Common myeloid progenitor, CD34-positive (primary cell): ENCODE measurements at regions of chr4 and their contacts with region 1.

Region 1: DNA sequence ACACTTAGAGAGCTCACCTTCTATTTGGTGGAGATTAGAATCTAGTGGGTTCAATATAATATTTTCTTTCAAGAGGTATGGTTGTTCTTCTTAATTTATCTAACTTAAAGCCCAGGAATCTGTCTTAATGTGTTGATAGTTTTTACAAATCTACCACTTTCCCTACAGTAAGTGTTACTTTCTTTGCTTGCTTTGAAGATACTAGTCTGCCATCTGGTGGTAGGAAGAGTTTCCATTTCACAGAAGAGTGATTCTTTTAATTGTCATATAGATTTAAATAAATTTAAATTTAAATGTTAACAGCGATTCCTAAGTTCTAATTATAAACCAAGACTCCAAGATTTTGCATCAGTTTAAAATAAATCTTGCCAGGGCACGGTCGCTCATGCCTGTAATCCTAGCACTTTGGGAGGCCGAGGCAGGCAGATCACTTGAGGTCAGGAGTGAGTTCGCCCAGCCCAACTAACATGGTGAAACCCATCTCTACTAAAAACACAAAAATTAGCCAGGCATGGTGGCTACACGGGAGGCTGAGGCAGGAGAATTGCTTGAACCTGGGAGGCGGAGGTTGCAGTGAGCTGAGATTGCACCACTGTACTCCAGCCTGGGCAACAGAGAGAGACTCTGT is 43.5 kb downstream of the NUDT9 start:
- DNase-seq: peak; percentile 58 to 83 (median 79)
- H3K4me3 ChIP-seq: no peak overlapping the region
- H3K27ac ChIP-seq: no peak overlapping the region
- H3K4me1 ChIP-seq: no peaks in the 10 kb centered on the region
- H3K27me3 ChIP-seq: no peaks in the 10 kb centered on the region

Region 2: DNA sequence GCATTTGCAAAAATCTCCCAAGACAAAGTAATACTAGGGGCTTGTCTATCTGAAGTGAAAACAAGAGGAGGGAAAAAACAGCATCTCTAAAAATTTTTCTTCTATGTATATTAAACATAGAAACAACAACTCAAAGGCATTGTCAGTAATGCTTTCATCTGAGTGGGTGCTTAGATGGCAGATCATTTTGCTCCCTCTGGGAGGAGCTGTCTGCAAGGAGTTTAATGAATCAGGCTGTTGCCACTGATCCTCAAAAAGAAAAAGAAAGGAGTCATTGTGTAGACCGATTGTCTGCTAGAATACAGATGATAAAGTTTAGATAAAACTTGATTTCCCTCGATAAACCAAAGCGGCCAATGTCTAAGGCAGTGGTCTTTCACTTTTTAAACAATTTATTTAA is 195.7 kb before region 1 on chr4:
- CTCF ChIA-PET with region 1: interaction called, 32 read pairs
- POLR2A ChIA-PET with region 1: no interaction called
- DNase-seq: peak; percentile 33 to 64 (median 60)
- H3K4me3 ChIP-seq: no peak overlapping the region
- H3K27ac ChIP-seq: no peak overlapping the region
- H3K4me1 ChIP-seq: peaks cover 0 to 5% (median 0%) of the 10 kb centered on the region in 4 experiments
- H3K27me3 ChIP-seq: no peaks in the 10 kb centered on the region